ENCODE measurements at regions of chr20 and their contacts with region 1.

Region 1: GRCh38 chr20:22403632-22404361 is 180.6 kb downstream of the FOXA2 start:
- DNase-seq: peak; percentile 63
- ATAC-seq: peak; percentile 63
- H3K4me3 ChIP-seq: peak overlapping the region; percentile 68
- H3K27ac ChIP-seq: peak overlapping the region; percentile 51
- H3K4me1 ChIP-seq: peaks cover 35% of the 10 kb centered on the region
- H3K27me3 ChIP-seq: no peaks in the 10 kb centered on the region
- CTCF ChIP-seq: no peak

Region 2: GRCh38 chr20:22374678-22375590 is 28.9 kb before region 1 on chr20:
- CTCF ChIA-PET with region 1: no interaction called
- POLR2A ChIA-PET with region 1: no interaction called
- intact Hi-C with region 1: loop called (anchors 1 kb)
- DNase-seq: peak; percentile 76
- ATAC-seq: peak; percentile 18
- H3K4me3 ChIP-seq: peak overlapping the region; percentile 43
- H3K27ac ChIP-seq: peak overlapping the region; percentile 85
- H3K4me1 ChIP-seq: peaks cover 65% of the 10 kb centered on the region
- H3K27me3 ChIP-seq: no peaks in the 10 kb centered on the region
- CTCF ChIP-seq: no peak